Activated CD4-positive, alpha-beta memory T cell treated with anti-CD3 and anti-CD28 coated beads for 36 hours (primary cell): ENCODE measurements at regions of chr1 and their contacts with region 1.

Region 1: GRCh38 chr1:26279456-26280332 is at the start of gene SH3BGRL3:
- DNase-seq: peak; percentile 89
- H3K4me3 Mint-ChIP-seq: peak within 1 kb of the TSS; percentile 89
- H3K27ac Mint-ChIP-seq: peak within 1 kb of the TSS; percentile 94
- H3K4me1 Mint-ChIP-seq: peaks cover 87% of the 10 kb centered on the region
- H3K27me3 Mint-ChIP-seq: no peaks in the 10 kb centered on the region
- total RNA-seq, gene SH3BGRL3: 305 to 320 TPM

Region 2: GRCh38 chr1:26111530-26112406 is 167.9 kb before region 1 on chr1 and contains the start of gene PDIK1L:
- CTCF ChIA-PET with region 1: interaction called, 4 read pairs
- POLR2A ChIA-PET with region 1: no interaction called
- intact Hi-C with region 1: loop called (anchors 5 kb)
- DNase-seq: peak; percentile 96
- H3K4me3 Mint-ChIP-seq: peak within 1 kb of the TSS; percentile 97
- H3K27ac Mint-ChIP-seq: peak within 1 kb of the TSS; percentile 93
- H3K4me1 Mint-ChIP-seq: peaks cover 28% of the 10 kb centered on the region
- H3K27me3 Mint-ChIP-seq: no peaks in the 10 kb centered on the region
- total RNA-seq, gene PDIK1L: 14.9 to 15.2 TPM

Region 3: DNA sequence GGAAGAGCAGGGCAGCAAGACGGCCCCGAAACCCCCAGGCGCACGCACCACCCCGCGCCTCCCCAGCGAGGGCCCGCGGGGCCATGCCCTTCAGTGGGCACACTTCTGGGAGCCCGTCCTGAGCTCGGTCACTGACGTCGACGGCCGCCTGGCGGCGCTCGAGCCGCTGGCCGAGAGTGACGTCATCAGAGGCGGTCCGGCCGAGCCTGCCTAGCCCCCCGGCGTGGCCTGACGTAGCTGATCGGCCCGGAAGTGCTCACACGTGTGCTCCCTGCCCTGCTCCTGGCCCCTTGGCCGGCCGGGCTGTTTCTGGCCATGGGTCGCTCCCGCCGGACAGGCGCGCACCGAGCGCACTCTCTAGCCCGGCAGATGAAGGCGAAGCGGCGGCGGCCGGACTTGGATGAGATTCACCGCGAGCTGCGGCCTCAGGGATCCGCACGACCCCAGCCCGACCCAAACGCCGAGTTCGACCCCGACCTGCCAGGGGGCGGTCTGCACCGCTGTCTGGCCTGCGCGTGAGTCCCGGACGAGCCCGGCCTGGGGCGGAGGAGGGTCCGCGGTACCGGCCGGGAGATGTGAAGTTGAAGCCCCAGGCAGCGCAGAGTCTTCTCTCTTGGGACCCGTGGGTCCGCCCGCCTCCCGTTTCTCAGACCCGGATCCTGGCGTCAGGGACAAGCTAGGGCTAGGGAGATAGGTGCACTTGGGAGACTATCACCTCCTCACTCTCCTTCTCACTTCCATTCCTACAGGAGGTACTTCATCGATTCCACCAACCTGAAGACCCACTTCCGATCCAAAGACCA is 109.8 kb before region 1 on chr1 and contains the start of gene ZNF593:
- CTCF ChIA-PET with region 1: interaction called, 15 read pairs
- POLR2A ChIA-PET with region 1: no interaction called
- intact Hi-C with region 1: no loop called
- DNase-seq: peak; percentile 94
- H3K4me3 Mint-ChIP-seq: peak within 1 kb of the TSS; percentile 83
- H3K27ac Mint-ChIP-seq: peak within 1 kb of the TSS; percentile 72
- H3K4me1 Mint-ChIP-seq: peaks cover 17% of the 10 kb centered on the region
- H3K27me3 Mint-ChIP-seq: no peaks in the 10 kb centered on the region
- total RNA-seq, gene ZNF593: 37.4 to 38.0 TPM

Region 4: GRCh38 chr1:26265405-26265804 is 14.3 kb before region 1 on chr1:
- CTCF ChIA-PET with region 1: interaction called, 15 read pairs
- POLR2A ChIA-PET with region 1: no interaction called
- intact Hi-C with region 1: no loop called
- DNase-seq: no peak
- H3K4me3 Mint-ChIP-seq: no peak overlapping the region
- H3K27ac Mint-ChIP-seq: no peak overlapping the region
- H3K4me1 Mint-ChIP-seq: peaks cover 6% of the 10 kb centered on the region
- H3K27me3 Mint-ChIP-seq: no peaks in the 10 kb centered on the region

Region 5: DNA sequence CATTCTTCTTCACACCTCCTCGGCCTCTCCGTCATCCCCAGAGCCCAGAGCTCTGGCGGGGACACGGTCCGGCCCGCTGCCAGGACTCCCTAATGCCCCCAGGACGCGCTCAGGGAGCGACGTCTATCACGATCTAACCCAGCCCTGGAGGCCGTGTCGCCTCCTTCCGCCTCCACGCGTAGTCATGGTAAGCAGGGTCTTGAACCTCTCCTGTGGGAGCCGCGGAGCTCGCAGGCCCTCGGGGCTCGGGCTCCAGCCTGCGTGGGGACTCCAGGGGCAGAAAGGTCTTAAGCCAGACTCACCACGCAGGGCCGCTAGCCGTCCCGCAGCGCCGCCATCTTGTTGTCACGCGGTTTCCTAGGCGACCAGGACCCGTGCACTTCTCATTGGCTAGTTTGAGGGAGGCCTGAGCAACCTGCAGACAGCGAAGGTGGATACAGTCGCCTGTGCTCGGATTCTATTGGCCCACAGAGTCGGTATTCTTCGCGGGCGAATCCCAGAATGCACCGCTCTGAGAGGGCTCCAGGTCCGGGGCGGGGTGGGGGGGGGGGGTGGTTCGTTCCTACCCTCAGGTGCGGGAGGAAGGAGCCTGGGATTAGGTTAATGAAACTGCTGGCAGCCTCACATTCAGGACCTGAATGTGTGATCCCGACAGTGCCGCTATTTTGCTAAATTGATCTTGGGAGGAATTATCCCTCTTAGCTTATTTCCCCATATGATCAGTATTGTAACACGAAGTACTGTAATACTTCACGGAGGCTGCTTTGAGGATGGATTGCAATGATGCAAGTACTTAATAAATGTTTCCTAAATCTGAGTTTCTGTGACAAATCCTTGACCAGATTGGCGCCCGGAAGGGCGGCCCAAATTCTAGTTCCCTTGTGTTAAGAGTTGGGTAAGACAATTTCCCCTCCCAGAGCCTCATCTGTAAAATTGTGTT is 26.9 kb after region 1 on chr1 and contains the start of gene UBXN11:
- CTCF ChIA-PET with region 1: interaction called, 886 read pairs
- POLR2A ChIA-PET with region 1: interaction called, 30 read pairs
- intact Hi-C with region 1: no loop called
- DNase-seq: peak; percentile 97
- H3K4me3 Mint-ChIP-seq: peak within 1 kb of the TSS; percentile 95
- H3K27ac Mint-ChIP-seq: peak within 1 kb of the TSS; percentile 92
- H3K4me1 Mint-ChIP-seq: peaks cover 32% of the 10 kb centered on the region
- H3K27me3 Mint-ChIP-seq: no peaks in the 10 kb centered on the region
- total RNA-seq, gene UBXN11: 24.5 to 26.1 TPM

Region 6: GRCh38 chr1:26363549-26364448 is 84.1 kb after region 1 on chr1:
- CTCF ChIA-PET with region 1: interaction called, 54 read pairs
- POLR2A ChIA-PET with region 1: no interaction called
- intact Hi-C with region 1: loop called (anchors 2 kb)
- DNase-seq: peak; percentile 91
- H3K4me3 Mint-ChIP-seq: peak overlapping the region; percentile 8
- H3K27ac Mint-ChIP-seq: peak overlapping the region; percentile 58
- H3K4me1 Mint-ChIP-seq: peaks cover 41% of the 10 kb centered on the region
- H3K27me3 Mint-ChIP-seq: peaks cover 7% of the 10 kb centered on the region

Region 7: GRCh38 chr1:26378088-26378878 is 98.6 kb after region 1 on chr1:
- CTCF ChIA-PET with region 1: interaction called, 9 read pairs
- POLR2A ChIA-PET with region 1: interaction called, 4 read pairs
- intact Hi-C with region 1: loop called (anchors 5 kb)
- DNase-seq: peak; percentile 81
- H3K4me3 Mint-ChIP-seq: peak overlapping the region; percentile 30
- H3K27ac Mint-ChIP-seq: peak overlapping the region; percentile 57
- H3K4me1 Mint-ChIP-seq: peaks cover 60% of the 10 kb centered on the region
- H3K27me3 Mint-ChIP-seq: no peaks in the 10 kb centered on the region